Vagina (tissue), 2 donors: ENCODE measurements at regions of chr20 and their contacts with region 1.

Region 1: GRCh38 chr20:5353624-5354496 is 37.1 kb upstream of the PROKR2 start:
- DNase-seq: no peak
- H3K4me3 ChIP-seq: no peak overlapping the region
- H3K27ac ChIP-seq: no peak overlapping the region
- H3K4me1 ChIP-seq: no peaks in the 10 kb centered on the region
- H3K27me3 ChIP-seq: no peaks in the 10 kb centered on the region
- CTCF ChIP-seq: no peak
- POLR2A ChIP-seq: no peak

Region 2: GRCh38 chr20:5316188-5317158 is 37.4 kb before region 1 on chr20 and contains the start of gene PROKR2:
- intact Hi-C with region 1: loop called (anchors 2 kb)
- DNase-seq: no peak
- H3K4me3 ChIP-seq: no peak within 1 kb of the TSS
- H3K27ac ChIP-seq: no peak within 1 kb of the TSS
- H3K4me1 ChIP-seq: no peaks in the 10 kb centered on the region
- H3K27me3 ChIP-seq: peaks cover 2% of the 10 kb centered on the region
- CTCF ChIP-seq: no peak
- POLR2A ChIP-seq: no peak
- total RNA-seq, gene PROKR2: not detected

Region 3: DNA sequence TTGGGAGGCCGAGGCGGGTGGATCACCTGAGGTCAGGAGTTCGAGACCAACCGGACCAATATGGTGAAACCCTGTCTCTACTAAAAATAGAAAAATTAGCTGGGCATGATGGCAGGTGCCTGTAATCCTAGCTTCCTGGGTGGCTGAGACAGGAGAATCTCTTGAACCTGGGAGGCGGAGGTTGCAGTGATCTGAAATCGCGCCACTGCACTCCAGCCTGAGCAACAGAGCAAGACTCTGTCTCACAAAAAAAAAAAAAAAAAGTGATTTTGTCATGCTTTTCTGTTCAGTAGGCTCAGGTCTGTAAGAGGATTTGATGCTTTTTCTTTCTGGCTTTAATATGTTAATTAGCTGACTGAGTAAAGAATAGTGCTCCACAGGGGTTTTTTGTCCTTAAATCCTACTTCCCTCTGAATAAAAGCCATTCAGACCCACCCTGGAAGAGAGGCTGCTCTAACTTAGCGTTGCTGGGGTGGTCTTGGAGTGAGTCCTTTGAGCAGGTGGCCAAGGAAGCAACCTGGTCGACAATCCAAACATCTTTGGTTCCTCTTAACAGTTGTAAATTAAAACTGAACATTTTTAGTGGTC is 615.6 kb after region 1 on chr20:
- intact Hi-C with region 1: no loop called
- DNase-seq: no peak
- H3K4me3 ChIP-seq: no peak overlapping the region
- H3K27ac ChIP-seq: no peak overlapping the region
- H3K4me1 ChIP-seq: no peaks in the 10 kb centered on the region
- H3K27me3 ChIP-seq: no peaks in the 10 kb centered on the region
- CTCF ChIP-seq: no peak
- POLR2A ChIP-seq: no peak

Region 4: GRCh38 chr20:6704132-6704861 is 1350.4 kb after region 1 on chr20:
- intact Hi-C with region 1: no loop called
- DNase-seq: no peak
- H3K4me3 ChIP-seq: no peak overlapping the region
- H3K27ac ChIP-seq: peak overlapping the region; percentile 62
- H3K4me1 ChIP-seq: peaks cover 20% of the 10 kb centered on the region
- H3K27me3 ChIP-seq: no peaks in the 10 kb centered on the region
- CTCF ChIP-seq: no peak
- POLR2A ChIP-seq: no peak